Panc1 (cell line): ENCODE measurements at regions of chr18 and their contacts with region 1.

Region 1: DNA sequence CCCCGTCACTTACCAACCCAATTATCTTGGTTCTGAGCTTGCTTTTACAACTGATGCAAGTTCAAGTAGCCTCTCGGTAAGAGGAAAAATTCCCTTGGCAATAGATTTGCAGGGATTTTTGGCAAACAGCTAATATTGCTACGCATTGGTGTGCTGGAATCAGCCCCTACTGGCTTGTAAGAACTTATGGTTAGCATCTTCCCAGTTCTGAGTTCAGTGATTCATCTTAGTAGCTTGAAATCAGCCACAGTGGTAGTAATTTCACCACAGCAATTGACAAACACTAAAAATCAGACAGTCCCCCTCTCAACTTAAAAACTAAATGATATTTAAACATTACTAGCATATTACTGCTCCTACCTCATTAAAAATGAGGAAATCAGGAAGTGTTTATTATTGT is 5.9 kb upstream of the RAX start:
- DNase-seq: no peak
- ATAC-seq: no peak
- H3K4me3 ChIP-seq: no peak overlapping the region
- H3K27ac ChIP-seq: no peak overlapping the region
- H3K4me1 ChIP-seq: no peaks in the 10 kb centered on the region
- H3K27me3 ChIP-seq: peaks cover 4% of the 10 kb centered on the region
- CTCF ChIP-seq: no peak

Region 2: DNA sequence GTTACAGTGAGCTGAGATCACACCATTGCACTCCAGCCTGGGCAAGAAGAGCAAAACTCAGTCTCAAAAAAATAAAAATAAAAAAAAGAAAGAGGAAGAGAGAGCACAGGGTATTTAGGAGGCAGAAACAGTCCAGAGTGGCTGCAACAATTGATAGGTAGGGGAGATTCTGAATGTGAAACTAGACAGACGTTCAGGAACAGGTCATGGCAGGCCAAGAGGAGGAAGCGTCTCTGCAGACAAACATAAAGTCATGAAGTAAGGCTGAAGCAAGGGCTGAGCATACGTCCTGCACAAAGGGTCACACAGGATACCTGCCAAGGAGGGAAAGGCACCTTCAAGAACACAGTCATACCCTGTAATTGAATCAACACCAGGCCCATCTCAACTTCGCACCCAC is 478.6 kb before region 1 on chr18:
- CTCF ChIA-PET with region 1: no interaction called
- POLR2A ChIA-PET with region 1: interaction called, 12 read pairs
- in situ Hi-C with region 1: no loop called
- intact Hi-C with region 1: no loop called
- DNase-seq: no peak
- ATAC-seq: no peak
- H3K4me3 ChIP-seq: no peak overlapping the region
- H3K27ac ChIP-seq: no peak overlapping the region
- H3K4me1 ChIP-seq: peaks cover 6% of the 10 kb centered on the region; the same call in 1 of the 2 replicates
- H3K27me3 ChIP-seq: no peaks in the 10 kb centered on the region
- CTCF ChIP-seq: no peak

Region 3: DNA sequence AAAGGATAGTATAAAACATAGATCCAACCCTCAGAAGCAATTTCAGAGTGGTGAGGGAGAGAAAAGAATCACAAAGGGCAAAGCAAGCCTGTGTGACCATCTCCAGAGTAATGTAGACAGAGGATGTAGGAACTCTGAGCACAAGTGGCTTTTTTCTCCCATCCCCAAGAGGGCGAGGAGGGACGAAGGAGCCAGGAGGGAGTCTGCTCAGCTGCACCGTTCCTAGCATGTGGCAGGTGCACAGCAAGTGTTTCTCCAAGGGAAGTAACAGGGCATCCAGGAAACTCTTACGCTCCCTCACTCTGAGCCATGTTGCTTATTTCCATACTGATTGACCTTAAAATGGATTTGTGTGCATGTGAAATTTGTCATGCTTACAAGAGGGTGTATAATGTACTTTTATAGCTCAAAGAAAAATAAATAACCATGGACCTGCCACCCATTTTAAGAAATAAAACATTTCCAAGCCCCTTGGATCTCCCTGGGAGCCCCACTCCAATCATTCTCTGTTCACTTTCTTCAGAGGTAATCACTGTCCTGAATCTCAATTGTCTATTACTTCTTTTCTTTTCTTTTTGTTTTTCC is 177.3 kb before region 1 on chr18:
- CTCF ChIA-PET with region 1: no interaction called
- POLR2A ChIA-PET with region 1: interaction called, 10 read pairs
- in situ Hi-C with region 1: no loop called
- intact Hi-C with region 1: no loop called
- DNase-seq: no peak
- ATAC-seq: no peak
- H3K4me3 ChIP-seq: no peak overlapping the region
- H3K27ac ChIP-seq: no peak overlapping the region
- H3K4me1 ChIP-seq: no peaks in the 10 kb centered on the region
- H3K27me3 ChIP-seq: peaks cover 11% of the 10 kb centered on the region; the same call in 1 of the 2 replicates
- CTCF ChIP-seq: no peak

Region 4: GRCh38 chr18:59358712-59359575 is 79.8 kb after region 1 on chr18 and contains the start of gene LMAN1:
- CTCF ChIA-PET with region 1: no interaction called
- POLR2A ChIA-PET with region 1: no interaction called
- in situ Hi-C with region 1: no loop called
- intact Hi-C with region 1: no loop called
- DNase-seq: peak; percentile 18
- ATAC-seq: peak; percentile 99
- H3K4me3 ChIP-seq: peak within 1 kb of the TSS; percentile 88 to 91
- H3K27ac ChIP-seq: peak within 1 kb of the TSS; percentile 60
- H3K4me1 ChIP-seq: peaks cover 9% of the 10 kb centered on the region
- H3K27me3 ChIP-seq: no peaks in the 10 kb centered on the region
- CTCF ChIP-seq: no peak
- total RNA-seq, gene LMAN1: 60.8 TPM